IMR-90 (cell line): ENCODE measurements at regions of chr7 and their contacts with region 1.

Region 1: GRCh38 chr7:134724606-134725005 is 54.8 kb upstream of the CALD1 start:
- DNase-seq: peak; percentile 54
- ATAC-seq: peak; percentile 52
- H3K4me3 ChIP-seq: no peak overlapping the region
- H3K27ac ChIP-seq: no peak overlapping the region
- H3K4me1 ChIP-seq: peaks cover 16% of the 10 kb centered on the region
- H3K27me3 ChIP-seq: no peaks in the 10 kb centered on the region
- CTCF ChIP-seq: peak; percentile 64
- POLR2A ChIP-seq: no peak
- RAD21 ChIP-seq: peak; percentile 63

Region 2: GRCh38 chr7:133442818-133443217 is 1281.8 kb before region 1 on chr7:
- CTCF ChIA-PET with region 1: no interaction called
- POLR2A ChIA-PET with region 1: no interaction called
- dilution Hi-C with region 1: no loop called
- in situ Hi-C with region 1: no loop called
- intact Hi-C with region 1: no loop called
- DNase-seq: no peak
- ATAC-seq: no peak
- H3K4me3 ChIP-seq: no peak overlapping the region
- H3K27ac ChIP-seq: no peak overlapping the region
- H3K4me1 ChIP-seq: no peaks in the 10 kb centered on the region
- H3K27me3 ChIP-seq: no peaks in the 10 kb centered on the region
- CTCF ChIP-seq: no peak
- POLR2A ChIP-seq: no peak
- RAD21 ChIP-seq: no peak

Region 3: GRCh38 chr7:134755401-134756022 is 30.9 kb after region 1 on chr7:
- CTCF ChIA-PET with region 1: interaction called, 11 read pairs
- POLR2A ChIA-PET with region 1: no interaction called
- dilution Hi-C with region 1: no loop called
- in situ Hi-C with region 1: no loop called
- intact Hi-C with region 1: no loop called
- DNase-seq: no peak
- ATAC-seq: peak; percentile 78
- H3K4me3 ChIP-seq: no peak overlapping the region
- H3K27ac ChIP-seq: no peak overlapping the region
- H3K4me1 ChIP-seq: peaks cover 5% of the 10 kb centered on the region; the same call in 1 of the 2 replicates
- H3K27me3 ChIP-seq: no peaks in the 10 kb centered on the region
- CTCF ChIP-seq: peak; percentile 68
- POLR2A ChIP-seq: no peak
- RAD21 ChIP-seq: peak; percentile 63

Region 4: DNA sequence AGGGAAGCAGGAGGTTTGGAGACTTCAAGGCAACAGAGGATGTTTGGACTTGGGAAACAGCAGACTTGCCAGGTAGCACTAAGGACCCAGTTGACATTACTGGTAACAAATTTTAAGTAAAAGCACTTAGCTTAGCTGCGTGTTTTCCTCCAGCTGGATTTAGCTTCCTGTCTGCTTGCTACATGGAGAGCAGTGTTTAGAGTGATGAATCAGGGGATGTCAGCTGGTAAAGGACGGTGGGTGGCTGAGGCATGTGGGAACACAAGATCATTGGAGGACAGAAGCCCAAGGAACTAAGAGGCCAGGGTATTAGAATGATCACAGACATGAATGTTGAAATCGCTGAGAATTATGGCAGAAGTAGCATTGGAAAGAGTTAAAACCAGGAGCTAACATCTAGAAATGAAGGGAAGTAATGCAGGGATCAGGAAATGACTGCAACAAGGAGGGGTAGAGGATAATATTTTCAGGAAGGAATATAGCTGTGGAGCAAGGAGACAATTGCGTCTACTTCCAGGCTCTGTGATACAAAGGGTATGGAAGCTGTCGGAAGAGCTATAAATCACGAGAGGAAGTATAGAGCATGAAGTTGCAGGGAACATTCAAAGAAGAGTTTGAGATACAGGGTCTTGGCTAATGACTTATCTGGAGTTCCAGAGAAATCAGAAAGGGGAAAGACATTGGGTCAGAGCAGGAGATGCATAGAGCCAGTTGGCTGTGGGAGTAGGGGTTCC is 89.2 kb after region 1 on chr7:
- CTCF ChIA-PET with region 1: interaction called, 11 read pairs
- POLR2A ChIA-PET with region 1: no interaction called
- dilution Hi-C with region 1: no loop called
- in situ Hi-C with region 1: no loop called
- intact Hi-C with region 1: no loop called
- DNase-seq: peak; percentile 87
- ATAC-seq: peak; percentile 63
- H3K4me3 ChIP-seq: no peak overlapping the region
- H3K27ac ChIP-seq: peak overlapping the region; percentile 52; the same call in 1 of the 2 replicates
- H3K4me1 ChIP-seq: peaks cover 27% of the 10 kb centered on the region
- H3K27me3 ChIP-seq: no peaks in the 10 kb centered on the region
- CTCF ChIP-seq: no peak
- POLR2A ChIP-seq: no peak
- RAD21 ChIP-seq: no peak

Region 5: GRCh38 chr7:134845468-134845867 is 120.9 kb after region 1 on chr7:
- CTCF ChIA-PET with region 1: no interaction called
- POLR2A ChIA-PET with region 1: no interaction called
- dilution Hi-C with region 1: no loop called
- in situ Hi-C with region 1: no loop called
- intact Hi-C with region 1: no loop called
- DNase-seq: no peak
- ATAC-seq: no peak
- H3K4me3 ChIP-seq: no peak overlapping the region
- H3K27ac ChIP-seq: no peak overlapping the region
- H3K4me1 ChIP-seq: peaks cover 10% of the 10 kb centered on the region
- H3K27me3 ChIP-seq: no peaks in the 10 kb centered on the region
- CTCF ChIP-seq: 0 out of 2 replicates have a peak, but pooled peaks have one; percentile 22
- POLR2A ChIP-seq: no peak
- RAD21 ChIP-seq: no peak